ENCODE measurements at regions of chr9 and their contacts with region 1.

Region 1: GRCh38 chr9:108053555-108054061 is 564.0 kb upstream of the KLF4 start:
- DNase-seq: peak; percentile 79 to 93 (median 82)
- ATAC-seq: peak; percentile 78 to 85
- H3K4me3 ChIP-seq: no peak overlapping the region
- H3K27ac ChIP-seq: peak overlapping the region; percentile 66
- H3K4me1 ChIP-seq: peaks cover 8% of the 10 kb centered on the region
- H3K27me3 ChIP-seq: no peaks in the 10 kb centered on the region

Region 2: DNA sequence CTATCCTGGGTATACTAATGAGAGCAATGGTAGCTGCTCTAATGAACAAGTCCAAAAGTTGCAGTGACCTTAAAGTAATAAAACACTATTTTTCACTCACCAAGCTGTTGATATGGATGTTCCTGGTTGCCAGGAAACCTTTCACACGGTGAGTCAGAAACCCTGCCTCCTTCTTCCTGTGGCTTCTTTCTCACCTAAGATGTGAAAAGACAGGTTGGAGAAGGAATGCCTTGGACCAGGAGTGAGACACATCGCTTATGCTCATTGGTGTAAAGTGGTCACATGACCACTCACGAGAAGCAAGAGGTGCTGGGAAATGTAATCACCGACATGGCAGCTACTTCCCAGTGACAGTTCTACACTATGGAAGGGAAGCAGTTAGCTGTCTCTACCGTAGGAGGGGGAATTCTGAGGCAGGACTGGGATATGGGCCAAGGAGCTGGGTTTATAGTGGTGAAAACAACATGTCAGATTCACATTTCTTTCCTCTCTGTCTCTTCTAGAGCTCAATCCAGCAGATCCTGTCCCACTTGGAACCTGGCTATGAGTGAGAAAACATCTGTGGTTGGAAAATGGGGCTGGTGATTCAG is 243.6 kb before region 1 on chr9:
- intact Hi-C with region 1: loop called in 1 of 4 experiments (anchors 10 kb)
- DNase-seq: no peak
- ATAC-seq: no peak
- H3K4me3 ChIP-seq: no peak overlapping the region
- H3K27ac ChIP-seq: no peak overlapping the region
- H3K4me1 ChIP-seq: no peaks in the 10 kb centered on the region
- H3K27me3 ChIP-seq: no peaks in the 10 kb centered on the region

Region 3: GRCh38 chr9:107905308-107906020 is 148.1 kb before region 1 on chr9:
- intact Hi-C with region 1: no loop called
- DNase-seq: peak in 1 of 3 donors; percentile 19
- ATAC-seq: peak in 1 of 2 donors; percentile 68
- H3K4me3 ChIP-seq: no peak overlapping the region
- H3K27ac ChIP-seq: no peak overlapping the region
- H3K4me1 ChIP-seq: no peaks in the 10 kb centered on the region
- H3K27me3 ChIP-seq: no peaks in the 10 kb centered on the region

Region 4: DNA sequence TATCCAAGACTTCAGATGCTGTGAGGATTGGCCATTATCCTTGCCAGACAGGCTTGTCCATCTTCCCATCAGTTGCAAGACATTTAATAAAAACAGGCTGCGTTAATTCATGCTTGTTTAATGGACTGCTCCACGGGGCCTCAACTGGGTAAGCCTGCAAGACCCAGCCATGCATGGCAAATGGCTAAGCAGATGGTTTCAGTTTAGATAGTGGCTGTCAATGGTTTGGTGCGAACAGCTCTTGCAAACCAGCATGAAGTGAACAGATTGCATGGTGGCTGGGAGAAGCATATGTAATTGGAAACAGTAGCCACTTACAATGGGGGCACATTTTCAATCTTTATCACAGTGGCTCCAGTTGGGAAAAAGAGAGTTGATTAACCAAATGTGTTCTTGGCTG is 64.2 kb after region 1 on chr9:
- intact Hi-C with region 1: loop called in 1 of 4 experiments (anchors 10 kb)
- DNase-seq: no peak
- ATAC-seq: no peak
- H3K4me3 ChIP-seq: no peak overlapping the region
- H3K27ac ChIP-seq: no peak overlapping the region
- H3K4me1 ChIP-seq: no peaks in the 10 kb centered on the region
- H3K27me3 ChIP-seq: no peaks in the 10 kb centered on the region